Activated CD4-positive, alpha-beta T cell treated with anti-CD3 and anti-CD28 coated beads, Interleukin-2, amount 10 ng/mL, durations not matched to agents 7 days and 5 days (primary cell): ENCODE measurements at regions of chr16 and their contacts with region 1.

Region 1: GRCh38 chr16:27424772-27425498 is 23.0 kb downstream of the IL21R start:
- DNase-seq: no peak
- H3K4me3 Mint-ChIP-seq: no peak overlapping the region
- H3K27ac Mint-ChIP-seq: no peak overlapping the region
- H3K4me1 Mint-ChIP-seq: peaks cover 58% of the 10 kb centered on the region
- H3K27me3 Mint-ChIP-seq: no peaks in the 10 kb centered on the region

Region 2: GRCh38 chr16:27408012-27408601 is 16.8 kb before region 1 on chr16:
- CTCF ChIA-PET with region 1: interaction called, 14 read pairs
- POLR2A ChIA-PET with region 1: interaction called, 8 read pairs
- DNase-seq: no peak
- H3K4me3 Mint-ChIP-seq: peak overlapping the region; percentile 98
- H3K27ac Mint-ChIP-seq: peak overlapping the region; percentile 71
- H3K4me1 Mint-ChIP-seq: peaks cover 76% of the 10 kb centered on the region
- H3K27me3 Mint-ChIP-seq: no peaks in the 10 kb centered on the region

Region 3: DNA sequence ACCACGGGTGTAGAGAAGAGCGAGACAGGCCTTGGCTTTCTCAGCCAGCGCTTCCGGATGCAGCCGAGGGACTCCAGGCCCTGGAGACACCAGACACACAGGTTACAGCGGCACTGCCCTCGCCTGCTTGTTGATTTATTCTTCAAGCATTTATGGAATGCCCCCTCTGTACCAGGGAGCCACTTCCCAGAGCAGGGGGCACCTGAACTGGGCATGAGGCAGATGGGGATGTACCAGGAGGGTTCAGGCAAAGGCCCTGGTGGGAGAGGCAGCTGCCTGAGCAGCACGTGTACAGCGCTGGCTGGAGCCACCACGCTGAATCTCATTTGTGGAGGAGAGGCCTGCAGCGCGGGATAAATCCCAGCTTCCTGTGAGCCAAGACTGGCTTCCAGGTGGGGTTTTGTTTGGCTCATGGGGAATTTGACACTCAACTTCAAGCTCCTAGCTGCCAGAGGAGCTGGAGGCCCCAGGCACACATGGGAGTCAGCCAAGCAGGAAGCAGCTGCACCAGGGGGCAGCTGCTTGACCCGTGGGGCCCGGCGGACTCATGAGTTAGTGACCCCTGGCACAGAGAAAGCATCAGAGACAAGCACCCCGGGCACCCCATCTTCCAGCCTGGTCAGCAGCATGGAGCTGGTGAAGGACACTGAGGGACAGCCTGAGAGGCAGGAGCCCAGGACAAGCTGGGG is 36.7 kb after region 1 on chr16:
- CTCF ChIA-PET with region 1: no interaction called
- POLR2A ChIA-PET with region 1: no interaction called
- DNase-seq: no peak
- H3K4me3 Mint-ChIP-seq: no peak overlapping the region
- H3K27ac Mint-ChIP-seq: peak overlapping the region; percentile 64
- H3K4me1 Mint-ChIP-seq: peaks cover 47% of the 10 kb centered on the region
- H3K27me3 Mint-ChIP-seq: no peaks in the 10 kb centered on the region

Region 4: DNA sequence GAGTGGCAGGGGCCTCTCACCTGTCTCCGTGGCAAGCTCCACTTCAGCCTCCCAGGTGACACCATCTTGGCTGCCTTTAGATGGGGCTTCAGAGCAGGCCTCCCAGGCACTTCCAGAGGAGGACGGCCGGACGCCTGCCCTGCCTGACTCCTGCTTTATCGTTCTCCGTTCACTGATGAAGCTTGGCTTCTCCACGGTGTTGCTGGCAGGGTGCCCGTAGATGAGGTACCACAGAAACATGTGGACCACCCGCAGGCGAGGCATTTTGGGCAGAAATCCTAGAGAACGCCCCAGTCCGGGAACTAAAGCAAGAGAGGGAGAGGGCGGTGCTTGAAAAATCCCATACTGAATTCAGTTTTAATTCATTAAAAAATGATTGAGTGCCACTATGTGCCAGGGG is 70.3 kb after region 1 on chr16:
- CTCF ChIA-PET with region 1: no interaction called
- POLR2A ChIA-PET with region 1: no interaction called
- DNase-seq: no peak
- H3K4me3 Mint-ChIP-seq: no peak overlapping the region
- H3K27ac Mint-ChIP-seq: no peak overlapping the region
- H3K4me1 Mint-ChIP-seq: no peaks in the 10 kb centered on the region
- H3K27me3 Mint-ChIP-seq: no peaks in the 10 kb centered on the region